HAP-1 (cell line): ENCODE measurements at regions of chr7 and their contacts with region 1.

Region 1: GRCh38 chr7:142511801-142512200 is 237.5 kb upstream of the PRSS1 start:
- DNase-seq: no peak
- H3K4me3 ChIP-seq: no peak overlapping the region
- H3K4me1 ChIP-seq: no peaks in the 10 kb centered on the region
- H3K27me3 ChIP-seq: no peaks in the 10 kb centered on the region

Region 2: DNA sequence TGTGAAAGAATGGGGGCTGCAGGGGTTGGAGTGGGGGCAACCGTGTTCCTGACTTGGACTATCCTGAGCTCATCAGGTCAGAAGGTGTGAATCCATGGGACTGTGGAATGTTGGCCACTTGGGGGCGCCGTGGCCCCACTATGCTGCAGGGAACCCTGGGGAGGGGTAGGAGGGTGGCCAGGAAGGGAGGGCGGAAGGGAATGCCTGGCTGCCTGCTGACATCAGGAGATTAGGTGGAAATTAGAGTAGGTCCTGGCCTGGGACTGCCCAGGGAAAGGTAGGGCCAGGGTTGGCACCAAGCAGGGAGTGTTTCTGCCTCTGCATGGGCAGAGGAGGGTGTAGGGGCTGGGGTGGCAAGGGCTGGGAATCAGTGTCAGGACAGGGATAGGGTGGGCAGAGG is 188.1 kb before region 1 on chr7:
- in situ Hi-C with region 1: no loop called
- DNase-seq: peak; percentile 7 to 69
- H3K4me3 ChIP-seq: no peak overlapping the region
- H3K4me1 ChIP-seq: no peaks in the 10 kb centered on the region
- H3K27me3 ChIP-seq: no peaks in the 10 kb centered on the region

Region 3: GRCh38 chr7:142469696-142470543 is 41.9 kb before region 1 on chr7:
- in situ Hi-C with region 1: loop called (anchors 5 kb)
- DNase-seq: no peak
- H3K4me3 ChIP-seq: no peak overlapping the region
- H3K4me1 ChIP-seq: no peaks in the 10 kb centered on the region
- H3K27me3 ChIP-seq: no peaks in the 10 kb centered on the region